Activated naive CD4-positive, alpha-beta T cell treated with anti-CD3 and anti-CD28 coated beads for 36 hours (primary cell): ENCODE measurements at regions of chr12 and their contacts with region 1.

Region 1: DNA sequence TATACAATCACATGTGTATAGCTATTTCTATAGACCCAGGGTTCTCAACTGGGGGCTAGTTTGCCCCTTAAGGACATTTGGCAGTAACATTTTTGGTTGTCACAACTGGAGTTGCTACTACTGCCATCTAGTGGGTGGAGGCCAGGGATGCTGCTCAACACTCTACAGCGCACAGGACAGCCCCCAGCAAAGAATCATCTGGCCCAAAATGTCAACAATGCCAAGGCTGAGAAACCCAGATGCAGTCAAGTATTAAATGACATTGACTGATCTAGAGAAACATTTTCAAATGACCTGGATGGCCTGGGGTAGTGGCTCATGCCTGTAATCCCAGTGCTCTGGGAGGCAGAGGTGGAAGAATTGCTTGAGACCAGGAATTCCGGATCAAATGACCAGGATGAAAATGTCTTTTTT is 5.8 kb downstream of the WSB2 start:
- DNase-seq: peak; percentile 85
- H3K4me3 Mint-ChIP-seq: no peak overlapping the region
- H3K27ac Mint-ChIP-seq: no peak overlapping the region
- H3K4me1 Mint-ChIP-seq: peaks cover 42% of the 10 kb centered on the region
- H3K27me3 Mint-ChIP-seq: no peaks in the 10 kb centered on the region

Region 2: GRCh38 chr12:118044075-118044474 is 11.1 kb before region 1 on chr12:
- CTCF ChIA-PET with region 1: interaction called, 34 read pairs
- intact Hi-C with region 1: no loop called
- DNase-seq: peak; percentile 38
- H3K4me3 Mint-ChIP-seq: no peak overlapping the region
- H3K27ac Mint-ChIP-seq: peak overlapping the region; percentile 84
- H3K4me1 Mint-ChIP-seq: peaks cover 50% of the 10 kb centered on the region
- H3K27me3 Mint-ChIP-seq: no peaks in the 10 kb centered on the region